ENCODE measurements at regions of chr6 and their contacts with region 1.

Region 1: GRCh38 chr6:168355716-168356449 is 36.3 kb upstream of the DACT2 start:
- DNase-seq: peak; percentile 72
- ATAC-seq: peak; percentile 88

Region 2: GRCh38 chr6:168150551-168151320 is 205.1 kb before region 1 on chr6:
- intact Hi-C with region 1: loop called (anchors 5 kb)
- DNase-seq: no peak
- ATAC-seq: no peak

Region 3: DNA sequence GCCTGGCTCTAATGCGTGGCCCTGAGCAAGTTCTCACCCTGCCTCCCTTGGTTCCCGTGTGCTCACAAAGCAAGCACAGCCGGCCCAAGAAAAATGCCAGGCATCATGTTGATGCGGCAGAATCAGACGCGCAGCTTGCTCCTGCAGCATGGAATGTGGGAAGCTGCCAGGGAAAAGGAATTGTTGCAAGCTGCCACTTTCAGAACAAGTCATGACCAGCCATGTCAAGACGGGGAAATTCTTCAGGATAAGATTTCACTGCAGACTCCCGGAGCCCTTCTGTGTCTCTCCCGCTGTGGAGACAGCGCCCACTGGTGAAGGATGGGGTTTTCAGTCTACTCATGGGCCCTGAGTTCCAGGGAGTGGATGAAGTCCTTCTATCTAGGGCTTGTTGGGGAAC is 40.9 kb before region 1 on chr6:
- intact Hi-C with region 1: no loop called
- DNase-seq: no peak
- ATAC-seq: peak; percentile 60

Region 4: DNA sequence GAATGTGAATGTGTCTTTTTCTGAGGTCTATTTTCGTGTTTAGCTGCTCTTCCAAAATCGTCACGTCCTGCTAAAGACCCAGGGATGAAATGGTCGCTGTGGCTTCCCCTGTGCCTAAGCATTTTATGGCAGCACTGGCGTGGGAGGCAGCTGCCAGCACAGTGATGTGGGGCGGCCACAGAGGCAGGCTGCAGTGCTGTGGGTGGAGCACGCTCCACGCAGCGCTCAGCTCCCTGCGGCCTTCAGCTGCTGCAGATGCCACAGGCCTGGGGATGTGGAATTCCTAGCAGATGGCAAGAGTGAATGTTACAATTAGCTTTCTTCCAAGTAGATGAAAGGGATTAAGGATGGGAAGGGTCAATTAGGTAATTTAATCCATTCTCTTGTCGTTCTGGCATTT is 327.7 kb after region 1 on chr6:
- intact Hi-C with region 1: no loop called
- DNase-seq: no peak
- ATAC-seq: no peak